ENCODE measurements at regions of chr11 and their contacts with region 1.

Region 1: GRCh38 chr11:70467201-70468085 is 69.1 kb downstream of the CTTN start:
- DNase-seq: peak; percentile 53
- H3K4me3 ChIP-seq: no peak overlapping the region
- H3K27ac ChIP-seq: no peak overlapping the region
- H3K4me1 ChIP-seq: peaks cover 15% of the 10 kb centered on the region
- H3K27me3 ChIP-seq: peaks cover 13% of the 10 kb centered on the region
- CTCF ChIP-seq: peak; percentile 90

Region 2: DNA sequence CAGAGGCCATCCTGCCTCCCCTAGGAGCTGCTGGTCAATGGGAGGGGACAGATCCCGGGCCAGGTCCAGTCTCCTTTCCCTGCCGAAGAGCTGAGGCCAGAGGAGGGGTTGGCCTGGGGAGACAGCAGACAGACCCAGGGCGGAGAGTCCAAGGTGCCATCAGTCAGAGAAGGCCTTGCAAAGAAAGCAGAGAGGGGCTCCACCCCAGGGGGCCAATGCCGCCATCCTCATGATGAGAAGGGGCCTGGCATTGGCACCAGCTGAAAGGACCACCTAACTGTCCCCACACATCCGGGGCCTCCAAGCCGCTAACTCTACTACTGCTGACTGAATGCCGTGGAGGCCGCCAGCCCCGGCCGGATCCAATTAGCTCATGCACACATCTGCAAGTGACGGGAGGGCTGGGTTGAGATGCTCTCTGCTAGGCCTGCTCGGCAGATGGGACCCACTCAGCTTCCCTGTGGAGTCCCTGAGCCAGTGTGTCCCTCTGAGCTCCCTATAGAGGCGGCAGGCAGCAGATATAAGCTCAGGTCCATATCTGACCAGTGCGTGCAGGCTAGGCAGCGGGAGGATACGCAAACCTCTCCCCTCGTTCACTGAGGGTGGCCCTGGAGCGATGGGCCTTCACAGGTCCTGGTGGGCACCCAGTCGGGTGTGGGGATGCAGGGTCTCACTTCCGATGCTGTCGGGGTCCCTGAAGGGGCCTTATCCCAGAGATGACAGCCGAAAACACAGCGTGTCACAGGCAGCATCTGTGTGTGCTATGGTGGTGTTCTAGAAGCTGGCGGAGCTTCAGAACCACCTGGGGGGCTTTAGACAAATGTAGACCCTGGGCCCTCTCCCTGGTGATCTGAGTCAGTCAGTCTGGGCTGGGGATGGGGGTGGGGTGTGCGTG is 114.8 kb after region 1 on chr11:
- intact Hi-C with region 1: no loop called
- DNase-seq: no peak
- H3K4me3 ChIP-seq: no peak overlapping the region
- H3K27ac ChIP-seq: no peak overlapping the region
- H3K4me1 ChIP-seq: no peaks in the 10 kb centered on the region
- H3K27me3 ChIP-seq: peaks cover 30% of the 10 kb centered on the region
- CTCF ChIP-seq: no peak

Region 3: GRCh38 chr11:70751142-70751734 is 283.8 kb after region 1 on chr11:
- intact Hi-C with region 1: loop called (anchors 5 kb)
- DNase-seq: no peak
- H3K4me3 ChIP-seq: no peak overlapping the region
- H3K27ac ChIP-seq: no peak overlapping the region
- H3K4me1 ChIP-seq: peaks cover 4% of the 10 kb centered on the region
- H3K27me3 ChIP-seq: peaks cover 37% of the 10 kb centered on the region
- CTCF ChIP-seq: no peak